Natural killer cell (primary cell): ENCODE measurements at regions of chr5 and their contacts with region 1.

Region 1: GRCh38 chr5:109688971-109689739 is 572 bp upstream of the MAN2A1 start:
- DNase-seq: peak; percentile 78 to 95
- ATAC-seq: peak; percentile 79 to 92 (median 86)
- H3K4me3 ChIP-seq: peak overlapping the region; percentile 62
- H3K4me3 Mint-ChIP-seq: peak overlapping the region; percentile 88
- H3K27ac ChIP-seq: peak overlapping the region; percentile 83
- H3K27ac Mint-ChIP-seq: peak overlapping the region; percentile 85 to 93
- H3K4me1 ChIP-seq: peaks cover 12% of the 10 kb centered on the region
- H3K4me1 Mint-ChIP-seq: peaks cover 35 to 44% of the 10 kb centered on the region in 2 donors
- H3K27me3 ChIP-seq: no peaks in the 10 kb centered on the region
- H3K27me3 Mint-ChIP-seq: peaks cover 0 to 9% of the 10 kb centered on the region in 2 donors
- CTCF ChIP-seq: peak; percentile 7

Region 2: GRCh38 chr5:108381954-108382783 is 1307.0 kb before region 1 on chr5 and contains the start of gene FBXL17:
- intact Hi-C with region 1: loop called (anchors 5 kb)
- DNase-seq: peak; percentile 90 to 97
- ATAC-seq: peak; percentile 76 to 91 (median 79)
- H3K4me3 ChIP-seq: peak within 1 kb of the TSS; percentile 62
- H3K4me3 Mint-ChIP-seq: peak within 1 kb of the TSS; percentile 89
- H3K27ac ChIP-seq: peak within 1 kb of the TSS; percentile 95
- H3K27ac Mint-ChIP-seq: peak within 1 kb of the TSS; percentile 93 to 94
- H3K4me1 ChIP-seq: peaks cover 8% of the 10 kb centered on the region
- H3K4me1 Mint-ChIP-seq: peaks cover 39 to 41% of the 10 kb centered on the region in 2 donors
- H3K27me3 ChIP-seq: no peaks in the 10 kb centered on the region
- H3K27me3 Mint-ChIP-seq: peaks cover 0 to 2% of the 10 kb centered on the region in 2 donors
- CTCF ChIP-seq: no peak
- total RNA-seq, gene FBXL17: 34.2 to 46.8 (median 34.9) TPM

Region 3: DNA sequence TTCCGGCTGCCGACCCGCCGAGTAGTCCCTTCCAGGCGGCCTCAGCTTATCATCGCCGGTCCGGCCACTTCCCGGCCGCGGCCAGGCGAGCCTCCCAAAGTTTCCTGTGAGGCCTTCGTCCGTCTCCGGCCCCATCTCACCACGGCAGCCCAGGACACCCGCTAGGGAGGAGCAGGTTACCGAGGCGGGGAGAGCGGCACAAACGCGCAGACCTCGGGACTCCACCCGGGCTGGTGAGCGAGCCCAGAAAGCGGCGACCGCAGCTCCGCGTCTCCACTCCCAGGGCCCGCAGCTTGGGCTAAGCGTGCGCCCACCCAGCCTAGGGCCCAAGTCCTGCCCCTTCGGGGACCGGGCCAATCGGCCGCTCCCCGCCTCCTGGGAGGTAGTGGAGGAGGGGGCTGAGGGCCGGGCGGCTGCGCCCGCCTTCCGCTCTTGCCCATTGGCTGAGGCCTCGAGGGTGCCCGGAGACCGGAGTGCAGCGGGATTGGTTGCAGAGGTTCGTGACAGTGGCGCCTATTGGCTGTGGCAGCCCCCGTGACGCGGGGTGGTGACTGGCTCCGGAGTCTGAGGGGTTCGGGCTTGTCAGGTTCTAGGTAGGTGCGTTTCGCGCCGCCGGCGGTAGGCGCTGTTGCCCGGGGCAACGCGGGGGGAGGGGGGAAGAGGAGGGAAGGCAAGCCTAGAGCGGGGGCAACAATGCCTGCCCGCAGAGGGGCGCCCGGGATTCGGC is 940.6 kb before region 1 on chr5:
- intact Hi-C with region 1: loop called (anchors 5 kb)
- DNase-seq: peak; percentile 97 to 98
- ATAC-seq: peak; percentile 87 to 98 (median 92)
- H3K4me3 ChIP-seq: peak overlapping the region; percentile 88
- H3K4me3 Mint-ChIP-seq: peak overlapping the region; percentile 96
- H3K27ac ChIP-seq: peak overlapping the region; percentile 92
- H3K27ac Mint-ChIP-seq: peak overlapping the region; percentile 91 to 95
- H3K4me1 ChIP-seq: peaks cover 12% of the 10 kb centered on the region
- H3K4me1 Mint-ChIP-seq: peaks cover 21% of the 10 kb centered on the region in 2 donors
- H3K27me3 ChIP-seq: no peaks in the 10 kb centered on the region
- H3K27me3 Mint-ChIP-seq: no peaks in the 10 kb centered on the region
- CTCF ChIP-seq: no peak

Region 4: GRCh38 chr5:109857405-109858031 is 168.4 kb after region 1 on chr5:
- intact Hi-C with region 1: loop called (anchors 5 kb)
- DNase-seq: peak; percentile 20 to 66
- ATAC-seq: peak; percentile 76 to 80 (median 76)
- H3K4me3 ChIP-seq: no peak overlapping the region
- H3K4me3 Mint-ChIP-seq: peak overlapping the region; percentile 80
- H3K27ac ChIP-seq: peak overlapping the region; percentile 75
- H3K27ac Mint-ChIP-seq: peak overlapping the region; percentile 92
- H3K4me1 ChIP-seq: peaks cover 22% of the 10 kb centered on the region
- H3K4me1 Mint-ChIP-seq: peaks cover 47 to 50% of the 10 kb centered on the region in 2 donors
- H3K27me3 ChIP-seq: no peaks in the 10 kb centered on the region
- H3K27me3 Mint-ChIP-seq: no peaks in the 10 kb centered on the region
- CTCF ChIP-seq: no peak

Region 5: GRCh38 chr5:110738812-110739651 is 1049.9 kb after region 1 on chr5 and contains the start of gene SLC25A46:
- intact Hi-C with region 1: loop called (anchors 2 kb)
- DNase-seq: peak; percentile 84 to 96
- ATAC-seq: peak; percentile 77 to 90 (median 87)
- H3K4me3 ChIP-seq: peak within 1 kb of the TSS; percentile 87
- H3K4me3 Mint-ChIP-seq: peak within 1 kb of the TSS; percentile 97
- H3K27ac ChIP-seq: peak within 1 kb of the TSS; percentile 88
- H3K27ac Mint-ChIP-seq: peak within 1 kb of the TSS; percentile 96 to 97
- H3K4me1 ChIP-seq: peaks cover 10% of the 10 kb centered on the region
- H3K4me1 Mint-ChIP-seq: peaks cover 27 to 36% of the 10 kb centered on the region in 2 donors
- H3K27me3 ChIP-seq: peaks cover 3% of the 10 kb centered on the region
- H3K27me3 Mint-ChIP-seq: peaks cover 7 to 14% of the 10 kb centered on the region in 2 donors
- CTCF ChIP-seq: no peak
- total RNA-seq, gene SLC25A46: 25.5 to 35.4 (median 34.5) TPM